Activated CD4-positive, alpha-beta T cell treated with anti-CD3 and anti-CD28 coated beads for 36 hours (primary cell): ENCODE measurements at regions of chr1 and their contacts with region 1.

Region 1: GRCh38 chr1:173429471-173430402 is 47.4 kb upstream of the PRDX6 start:
- DNase-seq: peak; percentile 86
- ATAC-seq: peak; percentile 87
- H3K4me3 Mint-ChIP-seq: peak overlapping the region; percentile 52
- H3K27ac Mint-ChIP-seq: peak overlapping the region; percentile 79
- H3K4me1 Mint-ChIP-seq: peaks cover 25% of the 10 kb centered on the region
- H3K27me3 Mint-ChIP-seq: no peaks in the 10 kb centered on the region

Region 2: DNA sequence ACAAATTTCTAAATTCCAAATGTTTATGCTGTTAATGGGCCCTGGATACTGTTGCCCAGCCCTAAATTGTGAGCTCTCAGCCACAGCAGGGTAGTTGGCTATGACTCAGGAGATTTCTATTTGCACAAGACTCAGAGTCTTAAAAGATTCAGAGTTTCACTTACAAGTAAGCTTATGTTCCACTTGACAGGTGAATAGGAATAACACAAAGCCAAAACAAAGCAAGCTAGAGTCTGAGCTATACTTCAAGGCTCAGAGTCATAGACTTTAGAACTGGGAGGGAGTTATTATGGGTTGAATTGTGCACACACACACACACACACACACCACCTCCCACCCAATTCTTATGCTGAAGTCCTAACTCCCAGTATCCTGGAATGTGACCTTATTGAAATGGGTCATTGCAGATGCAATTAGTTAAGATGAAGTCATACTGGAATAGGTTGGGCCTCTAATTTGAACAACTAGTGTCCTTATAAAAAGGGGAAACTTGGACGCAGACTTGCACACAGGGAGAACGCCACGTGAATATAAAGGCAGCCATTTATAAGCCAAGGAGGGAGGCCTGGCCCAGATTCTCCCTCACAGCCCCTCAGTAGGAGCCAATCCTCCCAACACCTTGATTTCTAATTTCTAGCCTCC is 77.6 kb after region 1 on chr1:
- CTCF ChIA-PET with region 1: interaction called, 20 read pairs
- POLR2A ChIA-PET with region 1: no interaction called
- intact Hi-C with region 1: loop called (anchors 1 to 5 kb)
- DNase-seq: no peak
- ATAC-seq: no peak
- H3K4me3 Mint-ChIP-seq: no peak overlapping the region
- H3K27ac Mint-ChIP-seq: no peak overlapping the region
- H3K4me1 Mint-ChIP-seq: no peaks in the 10 kb centered on the region
- H3K27me3 Mint-ChIP-seq: no peaks in the 10 kb centered on the region

Region 3: DNA sequence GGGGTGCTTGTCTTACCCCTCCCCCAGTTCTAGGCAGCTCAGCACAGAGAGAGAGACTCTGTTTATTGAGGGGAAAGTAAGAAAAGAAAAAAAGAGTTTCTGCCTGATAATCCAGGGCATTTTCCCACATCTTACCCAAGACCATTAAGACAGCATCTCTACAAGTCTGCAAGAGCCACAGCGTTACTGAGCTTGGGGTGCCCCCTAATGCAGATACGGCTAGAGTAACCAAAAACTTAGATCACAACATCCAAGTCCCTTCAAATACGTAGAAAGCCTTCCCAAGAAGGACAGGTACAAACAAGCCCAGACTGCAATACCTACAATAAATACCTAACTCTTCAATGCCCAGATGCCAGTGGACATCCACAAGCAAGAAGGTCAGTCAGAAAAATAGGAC is 199.2 kb after region 1 on chr1:
- CTCF ChIA-PET with region 1: interaction called, 8 read pairs
- POLR2A ChIA-PET with region 1: no interaction called
- intact Hi-C with region 1: loop called in 1 of 2 experiments (anchors 5 kb)
- DNase-seq: no peak
- ATAC-seq: no peak
- H3K4me3 Mint-ChIP-seq: no peak overlapping the region
- H3K27ac Mint-ChIP-seq: no peak overlapping the region
- H3K4me1 Mint-ChIP-seq: no peaks in the 10 kb centered on the region
- H3K27me3 Mint-ChIP-seq: peaks cover 2% of the 10 kb centered on the region

Region 4: GRCh38 chr1:173714759-173715537 is 285.2 kb after region 1 on chr1 and contains the start of gene KLHL20:
- CTCF ChIA-PET with region 1: interaction called, 17 read pairs
- POLR2A ChIA-PET with region 1: interaction called, 3 read pairs
- intact Hi-C with region 1: loop called (anchors 1 to 2 kb)
- DNase-seq: peak; percentile 90
- ATAC-seq: peak; percentile 99
- H3K4me3 Mint-ChIP-seq: peak within 1 kb of the TSS; percentile 86
- H3K27ac Mint-ChIP-seq: peak within 1 kb of the TSS; percentile 88
- H3K4me1 Mint-ChIP-seq: peaks cover 24% of the 10 kb centered on the region
- H3K27me3 Mint-ChIP-seq: peaks cover 11% of the 10 kb centered on the region
- total RNA-seq, gene KLHL20: 11.1 to 14.1 TPM

Region 5: DNA sequence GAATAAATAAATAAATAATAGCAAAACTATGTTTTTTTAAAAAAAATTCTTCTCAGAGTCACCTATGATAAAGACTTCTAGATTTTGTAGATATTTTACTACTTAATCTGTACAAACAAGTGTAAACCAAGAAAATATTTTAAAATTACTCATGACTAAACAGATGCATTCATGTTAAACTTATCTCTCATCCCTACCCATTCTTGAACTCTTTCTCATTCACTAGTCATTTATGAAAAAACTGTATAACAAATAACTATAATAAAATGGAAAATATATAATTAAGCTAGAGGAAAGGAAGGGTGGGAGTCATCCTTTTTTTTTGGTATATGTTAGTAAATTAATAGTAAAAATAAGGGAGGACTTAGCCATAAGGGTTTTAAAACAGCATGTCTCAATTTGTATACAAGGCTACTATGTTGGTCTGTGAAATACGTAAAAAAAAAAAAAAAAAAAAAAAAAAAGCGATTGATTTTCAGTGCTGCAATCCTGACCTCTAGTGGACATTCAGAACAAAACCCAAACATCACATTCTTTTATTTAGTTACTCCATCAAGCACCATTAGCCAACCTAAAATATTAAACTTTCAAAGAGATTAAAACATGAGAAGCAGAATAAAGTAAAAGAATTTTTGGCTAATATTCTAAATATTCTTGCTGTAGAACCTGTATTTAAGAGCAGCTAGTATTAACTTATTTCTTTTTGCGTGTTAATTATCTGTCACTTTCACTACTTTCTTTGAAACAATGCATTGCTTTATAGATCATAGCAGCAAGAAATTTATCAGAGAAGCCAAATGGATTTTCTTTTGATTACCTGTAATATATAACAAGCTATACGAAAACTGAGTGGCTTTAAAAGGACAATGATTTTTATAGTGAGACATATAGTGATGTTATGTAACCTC is 1314.2 kb after region 1 on chr1:
- CTCF ChIA-PET with region 1: no interaction called
- POLR2A ChIA-PET with region 1: no interaction called
- intact Hi-C with region 1: loop called in 1 of 2 experiments (anchors 5 kb)
- DNase-seq: no peak
- ATAC-seq: no peak
- H3K4me3 Mint-ChIP-seq: no peak overlapping the region
- H3K27ac Mint-ChIP-seq: no peak overlapping the region
- H3K4me1 Mint-ChIP-seq: peaks cover 3% of the 10 kb centered on the region
- H3K27me3 Mint-ChIP-seq: no peaks in the 10 kb centered on the region